Ovary (tissue), 10 donors: ENCODE measurements at regions of chr1 and their contacts with region 1.

Region 1: DNA sequence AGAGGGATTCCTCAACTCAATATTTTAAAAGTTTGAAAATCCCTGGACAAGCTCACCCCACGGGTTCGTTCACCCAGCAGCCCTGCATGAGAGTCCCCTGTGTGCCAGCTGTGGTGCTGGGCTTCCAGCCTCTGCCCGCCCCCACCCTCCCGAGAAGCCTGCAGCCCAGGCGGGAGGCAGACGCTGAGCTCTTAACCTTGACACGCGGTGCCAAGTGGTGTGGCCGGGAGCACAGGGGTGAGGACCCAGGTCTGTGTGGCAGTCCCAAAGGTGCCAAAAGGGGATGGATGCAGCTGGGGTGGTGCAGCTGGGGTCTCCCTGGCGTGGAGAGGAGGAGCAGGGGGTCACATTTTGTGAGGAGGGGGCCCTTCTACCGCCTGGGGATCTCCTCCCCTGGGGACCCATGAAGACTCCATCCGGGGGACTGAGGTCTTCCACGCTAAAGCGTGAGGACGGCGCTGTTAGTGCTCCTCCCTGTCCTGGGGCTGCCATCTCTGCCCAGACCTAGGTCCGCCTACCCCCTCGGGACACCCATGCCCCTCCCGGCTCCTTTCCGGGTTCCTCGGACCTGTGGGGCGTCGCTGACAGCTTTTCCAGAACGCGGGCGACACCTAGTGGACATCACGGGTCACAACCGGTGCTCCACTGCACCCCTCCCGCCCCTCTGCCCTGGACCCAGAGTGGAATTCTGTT is 12.9 kb downstream of the PLA2G2F start:
- DNase-seq: peak; percentile 85 to 94 (median 90)
- H3K4me3 ChIP-seq: peak overlapping the region; percentile 17
- H3K27ac ChIP-seq: peak overlapping the region in 1 of 2 donors; percentile 43
- H3K4me1 ChIP-seq: peaks cover 3% of the 10 kb centered on the region
- H3K27me3 ChIP-seq: no peaks in the 10 kb centered on the region
- CTCF ChIP-seq: peak; percentile 84 to 99 (median 97)
- EP300 ChIP-seq: no peak
- POLR2A ChIP-seq: no peak

Region 2: GRCh38 chr1:19918057-19918456 is 234.0 kb before region 1 on chr1:
- intact Hi-C with region 1: loop called (anchors 1 to 5 kb)
- DNase-seq: peak; percentile 84 to 95 (median 91)
- H3K4me3 ChIP-seq: no peak overlapping the region
- H3K27ac ChIP-seq: no peak overlapping the region
- H3K4me1 ChIP-seq: no peaks in the 10 kb centered on the region
- H3K27me3 ChIP-seq: no peaks in the 10 kb centered on the region
- CTCF ChIP-seq: peak; percentile 86 to 96 (median 95)
- EP300 ChIP-seq: no peak
- POLR2A ChIP-seq: no peak

Region 3: DNA sequence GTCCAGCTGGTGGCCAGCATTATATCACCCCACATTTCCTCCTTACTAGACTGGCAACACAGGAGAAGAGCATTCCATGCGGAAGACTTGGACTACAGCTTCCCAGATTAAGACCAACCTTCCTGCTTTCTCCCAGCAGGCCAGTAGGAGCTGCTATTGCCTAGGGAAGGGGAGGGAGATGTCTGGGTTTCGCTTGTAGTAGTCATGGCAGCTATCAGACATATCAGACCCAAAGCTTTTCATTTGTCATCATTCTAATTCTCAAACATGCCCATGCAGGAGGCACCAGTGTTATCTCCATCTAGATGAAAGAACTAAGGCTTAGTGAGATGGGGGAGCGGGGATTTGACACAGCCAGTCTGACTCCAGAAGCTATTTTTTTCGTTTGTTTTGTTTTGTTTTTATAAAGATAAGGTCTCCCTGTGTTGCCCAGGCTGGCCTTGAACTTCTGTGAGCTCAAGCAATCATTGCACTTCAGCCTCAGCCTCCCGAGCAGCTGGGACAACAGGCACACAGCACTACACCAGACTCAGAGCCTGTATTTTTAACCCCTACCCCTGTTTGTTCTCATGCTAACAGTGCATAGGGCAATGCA is 177.1 kb before region 1 on chr1:
- intact Hi-C with region 1: loop called in 2 of 4 experiments (anchors 2 to 5 kb)
- DNase-seq: peak; percentile 63 to 80 (median 77)
- H3K4me3 ChIP-seq: no peak overlapping the region
- H3K27ac ChIP-seq: peak overlapping the region in 1 of 2 donors; percentile 95
- H3K4me1 ChIP-seq: peaks cover 27% of the 10 kb centered on the region
- H3K27me3 ChIP-seq: no peaks in the 10 kb centered on the region
- CTCF ChIP-seq: peak; percentile 54 to 91 (median 85)
- EP300 ChIP-seq: no peak
- POLR2A ChIP-seq: peak; percentile 18

Region 4: DNA sequence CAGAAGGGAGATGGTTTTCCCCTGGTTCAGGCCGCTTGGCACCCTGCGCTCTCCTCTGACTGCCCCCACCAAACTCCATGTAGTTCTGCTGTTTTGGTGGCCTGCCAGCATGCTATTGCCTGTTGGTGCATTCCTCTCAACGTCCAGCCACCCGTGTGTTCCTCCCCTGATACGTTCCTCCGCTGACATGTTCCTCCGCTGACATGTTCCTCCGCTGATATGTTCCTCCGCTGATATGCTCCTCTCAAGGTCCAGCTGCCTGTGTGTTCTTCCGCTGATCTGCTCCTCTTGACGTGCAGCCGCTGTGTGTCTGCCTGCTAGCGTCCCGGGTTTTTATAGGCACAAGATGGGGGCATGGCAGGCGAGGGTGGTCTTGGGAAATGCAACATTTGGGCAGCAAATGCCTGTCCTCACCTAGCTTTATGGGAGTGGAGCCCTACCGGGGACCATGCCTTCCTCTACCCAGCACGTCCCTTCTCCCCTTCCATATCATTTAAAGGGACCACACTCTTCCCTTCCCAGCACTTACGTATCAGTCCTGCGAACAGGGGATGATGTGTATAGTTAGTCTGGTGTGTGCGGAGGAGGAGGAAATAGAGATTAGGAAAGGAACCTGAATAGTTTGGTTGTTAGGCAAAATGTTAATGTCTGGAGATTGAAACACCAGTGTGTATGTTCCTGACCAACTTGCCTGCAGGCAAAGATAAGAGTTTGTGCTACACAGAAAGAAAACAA is 122.7 kb before region 1 on chr1:
- intact Hi-C with region 1: no loop called
- DNase-seq: peak; percentile 48 to 82 (median 68)
- H3K4me3 ChIP-seq: peak overlapping the region; percentile 40
- H3K27ac ChIP-seq: peak overlapping the region; percentile 18 to 72
- H3K4me1 ChIP-seq: peaks cover 11% of the 10 kb centered on the region
- H3K27me3 ChIP-seq: no peaks in the 10 kb centered on the region
- CTCF ChIP-seq: no peak
- EP300 ChIP-seq: no peak
- POLR2A ChIP-seq: peak; percentile 50

Region 5: GRCh38 chr1:20100632-20101355 is 51.3 kb before region 1 on chr1:
- intact Hi-C with region 1: loop called in 2 of 4 experiments (anchors 5 kb)
- DNase-seq: peak; percentile 48 to 69 (median 53)
- H3K4me3 ChIP-seq: no peak overlapping the region
- H3K27ac ChIP-seq: no peak overlapping the region
- H3K4me1 ChIP-seq: no peaks in the 10 kb centered on the region
- H3K27me3 ChIP-seq: no peaks in the 10 kb centered on the region
- CTCF ChIP-seq: peak in 2 of 3 donors; percentile 79 to 80
- EP300 ChIP-seq: no peak
- POLR2A ChIP-seq: no peak